Transverse colon (tissue), 4 donors: ENCODE measurements at regions of chr7 and their contacts with region 1.

Region 1: DNA sequence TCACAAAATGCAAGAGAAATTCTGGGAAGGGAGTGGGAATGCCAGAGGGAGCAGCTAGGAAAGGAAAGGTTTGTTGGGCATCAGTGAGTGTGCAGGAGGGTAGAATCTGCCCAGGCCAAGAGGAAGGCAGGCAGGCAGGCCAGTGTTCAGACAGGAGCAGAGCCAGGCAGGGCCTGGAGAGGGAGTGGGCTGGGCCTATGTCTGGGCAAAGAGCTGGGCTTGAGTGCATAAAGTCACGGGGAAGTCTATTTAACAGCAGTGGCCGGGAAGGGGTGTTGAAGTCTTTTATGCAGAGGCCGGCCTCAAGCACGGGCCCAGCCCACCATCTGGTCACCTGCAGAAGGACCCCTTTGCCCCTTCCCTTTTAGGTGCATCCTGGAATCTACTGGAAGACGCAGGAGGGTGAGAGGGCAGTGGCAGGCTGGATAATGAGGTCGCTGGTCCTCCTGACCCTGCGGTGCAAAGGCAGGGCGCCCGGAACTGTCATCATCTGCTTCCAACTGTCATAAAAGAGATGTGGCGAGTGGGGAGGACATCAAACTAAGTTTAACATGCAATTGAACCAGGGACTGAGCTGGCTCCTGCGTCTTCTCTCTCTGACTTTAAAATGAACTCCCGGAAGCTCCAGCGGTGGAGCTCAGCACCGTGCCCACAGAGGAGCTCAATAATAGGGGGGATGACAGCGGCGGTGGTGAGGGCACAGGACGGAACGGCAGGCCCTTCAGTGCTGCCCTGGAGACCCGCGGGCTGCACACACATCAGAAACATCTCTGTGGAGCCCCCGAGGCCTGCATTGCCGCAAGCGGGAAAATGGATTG is 29.5 kb downstream of the CARD11 start:
- DNase-seq: no peak
- H3K4me3 ChIP-seq: no peak overlapping the region
- H3K27ac ChIP-seq: no peak overlapping the region
- H3K4me1 ChIP-seq: no peaks in the 10 kb centered on the region
- H3K27me3 ChIP-seq: no peaks in the 10 kb centered on the region
- CTCF ChIP-seq: no peak
- EP300 ChIP-seq: no peak
- POLR2A ChIP-seq: no peak

Region 2: DNA sequence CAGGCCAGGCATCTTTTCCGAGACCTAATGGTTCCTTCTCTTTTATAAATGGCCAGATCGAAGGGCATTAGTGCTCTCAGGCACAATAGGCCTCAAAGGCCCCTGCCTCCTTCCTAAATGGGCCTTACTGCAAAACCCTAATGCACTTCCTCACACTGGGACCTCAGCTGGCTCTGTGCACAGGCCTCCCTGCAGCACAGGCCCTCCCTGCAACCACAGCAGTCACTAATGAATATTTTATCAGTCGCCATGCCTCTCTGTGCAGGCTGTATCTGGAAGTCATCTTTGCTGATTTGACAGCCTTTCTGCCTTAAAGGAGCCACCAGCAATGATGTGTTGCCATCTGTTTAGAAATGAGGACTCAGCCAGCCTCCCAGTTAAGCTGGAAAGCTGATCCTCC is 231.9 kb after region 1 on chr7:
- in situ Hi-C with region 1: no loop called
- intact Hi-C with region 1: loop called (anchors 5 kb)
- DNase-seq: no peak
- H3K4me3 ChIP-seq: no peak overlapping the region
- H3K27ac ChIP-seq: no peak overlapping the region
- H3K4me1 ChIP-seq: no peaks in the 10 kb centered on the region
- H3K27me3 ChIP-seq: no peaks in the 10 kb centered on the region
- CTCF ChIP-seq: no peak
- EP300 ChIP-seq: no peak
- POLR2A ChIP-seq: no peak